CD14-positive monocyte (primary cell): ENCODE measurements at regions of chr12 and their contacts with region 1.

Region 1: GRCh38 chr12:98464190-98464589 is 51.2 kb upstream of the TMPO start:
- DNase-seq: peak; percentile 81 to 93 (median 89)
- H3K4me3 ChIP-seq: peak overlapping the region in 1 of 3 experiments; percentile 44
- H3K4me3 Mint-ChIP-seq: peak overlapping the region in 1 of 2 donors; percentile 39
- H3K27ac ChIP-seq: peak overlapping the region; percentile 55 to 81
- H3K27ac Mint-ChIP-seq: peak overlapping the region; percentile 89 to 98 (median 94)
- H3K4me1 ChIP-seq: peaks cover 61 to 69% of the 10 kb centered on the region in 2 donors
- H3K4me1 Mint-ChIP-seq: peaks cover 69% of the 10 kb centered on the region
- H3K27me3 ChIP-seq: no peaks in the 10 kb centered on the region
- H3K27me3 Mint-ChIP-seq: peaks cover 0 to 2% (median 0%) of the 10 kb centered on the region in 3 donors
- CTCF ChIP-seq: no peak

Region 2: GRCh38 chr12:98439981-98440581 is 24.1 kb before region 1 on chr12:
- intact Hi-C with region 1: loop called in 1 of 2 experiments (anchors 2 kb)
- DNase-seq: peak; percentile 95 to 99 (median 98)
- H3K4me3 ChIP-seq: peak overlapping the region in 2 of 3 experiments; percentile 37 to 46
- H3K4me3 Mint-ChIP-seq: peak overlapping the region; percentile 72 to 79
- H3K27ac ChIP-seq: peak overlapping the region; percentile 98
- H3K27ac Mint-ChIP-seq: peak overlapping the region; percentile 99 to 100 (median 100)
- H3K4me1 ChIP-seq: peaks cover 75 to 82% of the 10 kb centered on the region in 2 donors
- H3K4me1 Mint-ChIP-seq: peaks cover 78% of the 10 kb centered on the region
- H3K27me3 ChIP-seq: no peaks in the 10 kb centered on the region
- H3K27me3 Mint-ChIP-seq: peaks cover 0 to 2% (median 0%) of the 10 kb centered on the region in 3 donors
- CTCF ChIP-seq: no peak

Region 3: DNA sequence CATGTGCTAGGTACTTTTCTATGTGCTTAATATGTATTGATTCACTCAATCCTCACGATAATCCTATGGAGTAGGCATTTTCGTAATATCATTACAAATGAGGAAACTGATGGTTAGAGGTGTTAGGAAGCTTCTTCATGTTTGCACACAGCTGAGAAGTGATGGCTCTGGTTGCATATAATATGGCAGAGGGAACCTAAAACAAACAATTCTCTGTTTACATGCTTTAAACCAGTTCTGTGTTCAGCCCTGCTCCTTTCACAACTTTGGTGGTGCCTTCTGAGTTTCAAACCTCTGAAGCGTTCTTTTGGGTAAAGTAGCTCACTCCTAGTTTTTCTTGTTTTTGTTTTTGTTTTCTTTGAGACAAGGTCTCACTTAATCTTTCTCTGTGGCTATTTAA is 86.6 kb after region 1 on chr12:
- intact Hi-C with region 1: no loop called
- DNase-seq: no peak
- H3K4me3 ChIP-seq: no peak overlapping the region
- H3K4me3 Mint-ChIP-seq: no peak overlapping the region
- H3K27ac ChIP-seq: no peak overlapping the region
- H3K27ac Mint-ChIP-seq: peak overlapping the region in 2 of 7 donors; percentile 56 to 70
- H3K4me1 ChIP-seq: no peaks in the 10 kb centered on the region
- H3K4me1 Mint-ChIP-seq: peaks cover 7% of the 10 kb centered on the region
- H3K27me3 ChIP-seq: no peaks in the 10 kb centered on the region
- H3K27me3 Mint-ChIP-seq: peaks cover 0 to 2% (median 1%) of the 10 kb centered on the region in 3 donors
- CTCF ChIP-seq: no peak

Region 4: GRCh38 chr12:98653866-98654493 is 189.8 kb after region 1 on chr12:
- intact Hi-C with region 1: no loop called
- DNase-seq: peak; percentile 32 to 68 (median 48)
- H3K4me3 ChIP-seq: no peak overlapping the region
- H3K4me3 Mint-ChIP-seq: no peak overlapping the region
- H3K27ac ChIP-seq: no peak overlapping the region
- H3K27ac Mint-ChIP-seq: peak overlapping the region in 2 of 7 donors; percentile 27 to 75
- H3K4me1 ChIP-seq: no peaks in the 10 kb centered on the region
- H3K4me1 Mint-ChIP-seq: peaks cover 12% of the 10 kb centered on the region
- H3K27me3 ChIP-seq: no peaks in the 10 kb centered on the region
- H3K27me3 Mint-ChIP-seq: peaks cover 0 to 1% (median 0%) of the 10 kb centered on the region in 3 donors
- CTCF ChIP-seq: peak; percentile 71